ENCODE measurements at regions of chr12 and their contacts with region 1.

Region 1: GRCh38 chr12:46372544-46373110 is at the start of gene SLC38A2:
- DNase-seq: peak; percentile 97
- H3K4me3 Mint-ChIP-seq: peak within 1 kb of the TSS; percentile 96
- H3K27ac Mint-ChIP-seq: peak within 1 kb of the TSS; percentile 98
- H3K4me1 Mint-ChIP-seq: peaks cover 51% of the 10 kb centered on the region
- H3K27me3 Mint-ChIP-seq: no peaks in the 10 kb centered on the region
- total RNA-seq, gene SLC38A2: 196 to 206 TPM

Region 2: DNA sequence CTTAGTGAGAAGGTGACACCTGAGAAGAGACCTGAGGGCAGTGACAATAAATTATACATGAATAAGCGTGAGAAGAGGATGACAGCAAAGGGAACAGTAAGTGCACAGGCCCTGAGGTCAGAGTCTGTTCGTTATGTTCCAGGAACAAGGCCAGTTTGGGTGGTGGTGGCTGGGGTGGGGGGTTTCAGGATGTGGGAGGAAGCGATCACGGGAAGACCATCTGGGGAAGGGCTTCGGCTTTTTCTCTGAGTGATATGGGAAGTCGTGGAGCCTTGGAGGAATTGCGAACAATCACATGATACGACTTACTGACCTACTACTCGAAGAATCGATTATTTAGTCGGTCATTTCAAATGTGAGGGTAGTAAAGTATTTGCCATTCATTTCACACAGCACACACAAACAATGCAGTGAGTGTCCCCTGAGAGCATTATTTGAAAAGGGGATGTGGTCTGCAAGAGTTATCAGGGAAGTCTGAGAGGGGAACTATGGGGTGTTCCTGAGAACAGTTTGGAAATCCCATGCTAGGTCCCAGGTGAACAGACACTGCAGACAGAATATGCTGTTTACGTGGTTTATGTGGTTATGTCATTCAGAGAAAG is 198.5 kb before region 1 on chr12:
- CTCF ChIA-PET with region 1: no interaction called
- intact Hi-C with region 1: no loop called
- DNase-seq: no peak
- H3K4me3 Mint-ChIP-seq: no peak overlapping the region
- H3K27ac Mint-ChIP-seq: no peak overlapping the region
- H3K4me1 Mint-ChIP-seq: peaks cover 19% of the 10 kb centered on the region
- H3K27me3 Mint-ChIP-seq: no peaks in the 10 kb centered on the region

Region 3: DNA sequence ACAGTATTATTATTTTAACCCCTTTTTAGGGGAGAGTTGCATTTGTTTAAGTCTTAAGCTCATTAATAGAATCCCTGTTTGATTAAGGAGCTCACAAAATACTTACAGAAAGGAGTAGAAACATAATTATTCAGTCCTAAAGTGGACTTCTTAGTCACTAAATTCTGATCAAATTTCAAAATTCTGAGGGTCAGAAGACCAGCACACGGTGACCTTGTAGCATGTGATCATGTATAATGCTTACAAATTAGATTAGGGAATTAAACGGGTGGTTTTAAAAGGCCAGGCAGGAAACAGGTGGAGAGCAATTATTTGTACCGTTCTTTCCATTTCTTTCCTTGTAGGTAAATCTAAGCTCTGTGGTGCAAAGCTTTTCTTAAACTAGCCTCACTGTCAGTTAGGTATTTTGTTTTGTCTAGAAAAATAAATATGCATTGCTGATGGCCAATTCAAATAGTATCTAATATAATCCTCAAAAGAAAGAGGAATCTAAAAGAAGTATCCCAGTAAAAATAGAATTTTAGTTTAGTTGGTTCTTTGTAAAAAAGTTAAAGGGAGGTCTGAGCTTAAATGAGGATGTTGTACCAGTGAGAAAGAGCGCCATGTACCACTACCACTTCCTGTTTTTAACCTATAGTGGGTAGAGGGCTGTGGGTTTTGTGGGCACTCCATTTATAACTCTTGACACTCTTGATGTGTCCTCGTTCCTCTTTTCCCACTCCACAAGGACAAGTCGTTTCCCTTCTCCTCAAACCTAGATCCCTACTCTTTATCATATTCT is 154.9 kb before region 1 on chr12:
- CTCF ChIA-PET with region 1: no interaction called
- intact Hi-C with region 1: loop called (anchors 1 kb)
- DNase-seq: peak; percentile 74
- H3K4me3 Mint-ChIP-seq: peak overlapping the region; percentile 33
- H3K27ac Mint-ChIP-seq: peak overlapping the region; percentile 100
- H3K4me1 Mint-ChIP-seq: peaks cover 95% of the 10 kb centered on the region
- H3K27me3 Mint-ChIP-seq: no peaks in the 10 kb centered on the region

Region 4: DNA sequence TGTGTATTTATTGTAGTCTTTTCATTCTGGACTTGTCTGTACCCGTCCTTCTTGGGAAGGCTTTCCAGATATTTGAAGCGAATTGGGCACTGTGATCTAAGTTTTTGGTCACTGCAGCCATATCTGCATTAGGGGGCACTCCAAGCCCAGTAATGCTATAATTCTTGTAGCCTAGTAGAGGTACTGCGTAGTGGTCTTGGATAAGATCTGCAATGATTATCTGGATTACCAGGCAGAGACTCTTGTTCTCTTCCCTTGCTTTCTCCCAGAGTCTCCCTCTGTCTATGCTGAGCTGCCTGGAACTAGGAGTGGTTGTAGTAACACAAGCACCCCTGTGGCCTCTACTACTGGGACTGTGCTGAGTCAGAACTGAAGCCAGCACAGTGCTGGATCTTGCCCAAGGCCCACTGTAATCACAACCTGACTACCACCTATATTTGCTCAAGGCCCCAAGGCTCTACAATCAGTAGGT is 30.0 kb before region 1 on chr12:
- CTCF ChIA-PET with region 1: no interaction called
- intact Hi-C with region 1: no loop called
- DNase-seq: peak; percentile 48
- H3K4me3 Mint-ChIP-seq: no peak overlapping the region
- H3K27ac Mint-ChIP-seq: no peak overlapping the region
- H3K4me1 Mint-ChIP-seq: peaks cover 5% of the 10 kb centered on the region
- H3K27me3 Mint-ChIP-seq: no peaks in the 10 kb centered on the region

Region 5: DNA sequence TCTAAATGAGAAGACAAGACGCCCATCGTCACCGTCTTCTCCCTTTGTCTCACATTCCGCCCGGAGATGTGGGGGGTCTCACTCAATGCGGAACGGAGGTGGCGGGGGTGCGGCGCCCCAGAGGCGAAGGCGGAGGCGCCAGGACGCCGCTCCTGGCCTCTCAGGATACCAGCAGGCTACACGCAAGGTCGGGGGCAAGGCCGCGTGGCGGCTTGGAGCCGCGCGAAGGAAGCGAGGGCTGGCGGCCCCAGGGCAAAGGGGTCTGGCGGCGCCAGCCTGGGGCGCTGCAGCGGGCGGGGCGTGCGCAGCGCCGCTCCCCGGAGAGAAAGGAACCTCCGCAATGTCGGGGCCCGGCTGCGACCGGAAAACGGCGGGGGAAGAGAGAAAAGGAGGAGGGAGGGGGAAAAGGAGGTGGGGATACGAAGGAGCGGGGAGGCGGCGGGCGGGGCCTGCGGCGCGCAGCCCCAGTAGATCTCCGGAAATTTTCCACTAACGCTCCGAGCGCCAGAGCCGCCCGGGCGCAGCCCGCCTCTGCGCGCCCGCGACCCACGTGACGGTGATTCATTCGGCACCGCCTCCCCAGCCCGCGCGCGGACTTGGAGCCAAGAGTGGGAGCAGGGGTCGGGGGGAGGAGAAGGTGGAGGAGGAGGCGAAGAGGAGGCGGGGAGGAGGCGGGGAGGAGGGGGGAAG is 10.5 kb after region 1 on chr12:
- CTCF ChIA-PET with region 1: interaction called, 3 read pairs
- intact Hi-C with region 1: loop called (anchors 1 kb)
- DNase-seq: peak; percentile 96
- H3K4me3 Mint-ChIP-seq: peak overlapping the region; percentile 77
- H3K27ac Mint-ChIP-seq: peak overlapping the region; percentile 87
- H3K4me1 Mint-ChIP-seq: peaks cover 38% of the 10 kb centered on the region
- H3K27me3 Mint-ChIP-seq: no peaks in the 10 kb centered on the region

Region 6: GRCh38 chr12:46523863-46524770 is 151.5 kb after region 1 on chr12:
- CTCF ChIA-PET with region 1: interaction called, 4 read pairs
- intact Hi-C with region 1: loop called (anchors 1 kb)
- DNase-seq: peak; percentile 76
- H3K4me3 Mint-ChIP-seq: peak overlapping the region; percentile 61
- H3K27ac Mint-ChIP-seq: peak overlapping the region; percentile 81
- H3K4me1 Mint-ChIP-seq: peaks cover 38% of the 10 kb centered on the region
- H3K27me3 Mint-ChIP-seq: no peaks in the 10 kb centered on the region

Region 7: GRCh38 chr12:47216150-47216677 is 843.6 kb after region 1 on chr12:
- CTCF ChIA-PET with region 1: no interaction called
- intact Hi-C with region 1: loop called (anchors 5 kb)
- DNase-seq: peak; percentile 83
- H3K4me3 Mint-ChIP-seq: peak overlapping the region; percentile 94
- H3K27ac Mint-ChIP-seq: peak overlapping the region; percentile 100
- H3K4me1 Mint-ChIP-seq: peaks cover 12% of the 10 kb centered on the region
- H3K27me3 Mint-ChIP-seq: no peaks in the 10 kb centered on the region

Region 8: DNA sequence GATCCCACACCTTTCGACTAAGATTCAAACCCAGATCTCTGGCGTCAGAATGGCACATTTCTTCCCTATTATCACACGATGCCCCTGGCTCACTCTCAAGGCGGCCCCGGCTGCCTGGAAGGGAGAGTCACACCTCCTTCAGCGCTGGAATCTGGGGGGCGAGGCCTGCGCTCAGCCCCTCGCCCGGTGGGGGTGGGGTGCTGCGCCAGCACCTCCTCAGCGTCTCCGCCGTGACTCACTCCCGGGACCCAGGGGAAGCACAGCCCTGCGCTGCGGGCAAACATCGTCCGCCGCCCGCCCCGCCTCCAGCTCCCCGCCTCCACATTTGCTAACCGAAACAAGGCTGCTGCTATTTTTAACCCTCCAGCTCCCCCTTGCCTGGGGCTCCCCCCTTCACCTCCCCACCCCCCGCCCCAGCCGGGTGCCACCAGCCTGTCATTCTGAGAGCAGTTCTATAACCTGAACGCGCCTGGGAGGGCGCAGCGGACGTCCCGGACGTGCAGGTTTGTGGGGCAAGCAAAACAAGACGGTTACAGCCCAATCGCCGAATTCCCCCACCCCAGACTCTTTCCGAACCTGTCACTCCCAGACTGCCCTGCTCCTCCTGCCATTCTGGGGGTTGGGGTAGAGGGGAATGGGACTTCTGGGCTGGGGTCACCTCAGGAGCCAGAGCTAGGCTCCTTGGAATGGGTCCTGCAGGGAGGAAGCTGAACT is 1440.3 kb after region 1 on chr12:
- CTCF ChIA-PET with region 1: no interaction called
- intact Hi-C with region 1: loop called (anchors 10 kb)
- DNase-seq: peak; percentile 99
- H3K4me3 Mint-ChIP-seq: peak overlapping the region; percentile 88
- H3K27ac Mint-ChIP-seq: peak overlapping the region; percentile 98
- H3K4me1 Mint-ChIP-seq: peaks cover 75% of the 10 kb centered on the region
- H3K27me3 Mint-ChIP-seq: no peaks in the 10 kb centered on the region

Measured in activated naive CD4-positive, alpha-beta T cell treated with anti-CD3 and anti-CD28 coated beads for 36 hours (primary cell).